Naive thymus-derived CD4-positive, alpha-beta T cell (primary cell): ENCODE measurements at regions of chr15 and their contacts with region 1.

Region 1: DNA sequence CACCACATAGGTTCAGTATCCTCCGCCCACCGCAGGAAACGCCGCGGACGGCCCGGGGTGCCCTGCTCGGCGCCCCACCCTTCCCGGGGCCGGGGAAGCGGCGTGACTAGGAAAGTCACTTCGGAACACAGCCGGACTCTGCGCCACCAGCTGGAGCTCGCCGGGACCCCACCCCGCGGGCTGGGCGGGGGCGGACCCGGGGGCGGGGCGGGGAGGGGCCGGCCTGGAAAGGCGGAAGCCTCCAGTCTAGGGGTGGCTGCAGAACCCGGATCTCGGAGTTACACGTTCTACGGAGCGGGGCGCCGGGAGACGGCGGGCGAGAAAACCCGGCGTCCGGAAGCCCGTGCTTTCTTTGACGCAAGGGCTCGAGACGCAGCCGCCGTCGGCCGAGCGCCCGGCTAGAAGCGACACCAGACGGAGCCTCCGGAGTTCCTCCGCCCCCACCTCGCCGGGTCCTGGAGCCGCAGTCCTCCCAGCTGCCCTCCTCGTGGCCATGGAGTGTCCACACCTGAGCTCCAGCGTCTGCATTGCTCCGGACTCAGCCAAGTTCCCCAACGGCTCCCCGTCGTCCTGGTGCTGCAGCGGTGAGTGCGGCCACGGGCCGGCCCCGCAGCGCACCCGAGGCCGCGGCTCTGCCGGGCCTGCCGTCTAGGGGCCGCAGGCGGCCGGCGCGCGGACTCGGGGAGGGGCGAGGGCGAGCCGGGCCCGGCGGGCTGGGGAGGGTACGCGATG is at the start of gene USP3:
- DNase-seq: peak; percentile 88 to 95 (median 94)
- ATAC-seq: peak; percentile 86
- H3K4me3 ChIP-seq: peak within 1 kb of the TSS; percentile 95
- H3K4me3 Mint-ChIP-seq: peak within 1 kb of the TSS; percentile 93 to 99 (median 98)
- H3K27ac ChIP-seq: peak within 1 kb of the TSS; percentile 97
- H3K27ac Mint-ChIP-seq: peak within 1 kb of the TSS; percentile 94 to 99 (median 97)
- H3K4me1 ChIP-seq: peaks cover 65 to 70% of the 10 kb centered on the region in 2 donors
- H3K4me1 Mint-ChIP-seq: peaks cover 30 to 75% (median 72%) of the 10 kb centered on the region in 7 donors
- H3K27me3 ChIP-seq: no peaks in the 10 kb centered on the region
- H3K27me3 Mint-ChIP-seq: no peaks in the 10 kb centered on the region
- total RNA-seq, gene USP3: 64.2 to 288 (median 155) TPM

Region 2: GRCh38 chr15:63188926-63189871 is 315.2 kb before region 1 on chr15 and contains the start of gene RAB8B:
- CTCF ChIA-PET with region 1: interaction called, 3 read pairs
- POLR2A ChIA-PET with region 1: interaction called, 4 read pairs
- intact Hi-C with region 1: loop called (anchors 1 to 2 kb)
- DNase-seq: peak; percentile 85 to 98 (median 93)
- ATAC-seq: peak; percentile 88
- H3K4me3 ChIP-seq: peak within 1 kb of the TSS; percentile 86
- H3K4me3 Mint-ChIP-seq: peak within 1 kb of the TSS; percentile 92 to 99 (median 97)
- H3K27ac ChIP-seq: peak within 1 kb of the TSS; percentile 99
- H3K27ac Mint-ChIP-seq: peak within 1 kb of the TSS; percentile 84 to 98 (median 95)
- H3K4me1 ChIP-seq: peaks cover 22 to 40% of the 10 kb centered on the region in 2 donors
- H3K4me1 Mint-ChIP-seq: peaks cover 41 to 54% (median 50%) of the 10 kb centered on the region in 7 donors
- H3K27me3 ChIP-seq: no peaks in the 10 kb centered on the region
- H3K27me3 Mint-ChIP-seq: peaks cover 0 to 3% (median 0%) of the 10 kb centered on the region in 5 donors
- total RNA-seq, gene RAB8B: 37.2 to 100 (median 71.3) TPM

Region 3: DNA sequence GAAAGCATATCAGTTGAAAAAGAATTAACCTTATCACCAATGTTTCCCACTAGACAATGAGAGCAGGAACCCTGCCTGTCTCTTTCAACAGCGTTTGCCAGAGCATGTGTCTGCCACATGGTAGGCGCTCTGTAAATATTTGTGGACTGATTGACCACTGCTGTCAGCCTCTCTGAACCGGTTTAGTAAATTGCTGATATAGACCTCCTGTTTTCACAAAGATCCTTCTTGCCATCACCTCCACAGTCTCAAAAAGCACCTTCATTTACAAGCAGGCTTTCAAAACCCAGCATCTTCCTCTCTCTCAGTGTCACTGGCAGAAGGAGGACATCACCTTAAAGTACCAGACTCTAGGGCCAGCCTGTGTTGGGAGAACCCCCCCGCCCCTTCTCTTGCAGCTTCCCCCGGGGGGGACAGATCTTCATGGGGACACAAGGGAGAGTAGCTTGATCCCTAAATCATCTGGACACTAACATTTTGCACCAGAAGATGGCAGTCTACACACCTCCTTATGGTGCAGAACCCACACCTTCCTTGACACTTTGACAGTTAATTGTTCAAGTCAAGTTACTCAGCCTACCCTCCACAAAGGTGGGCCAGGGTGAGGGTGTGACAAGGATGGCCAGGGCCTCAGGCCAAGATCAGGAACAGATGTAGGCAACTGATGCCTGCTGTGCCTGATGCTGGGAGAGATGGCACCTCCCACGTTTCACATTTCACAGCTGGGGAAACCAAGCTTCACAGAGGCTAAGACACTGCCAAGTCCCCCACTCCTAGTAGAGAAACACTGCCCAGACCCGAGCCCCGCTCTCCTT is 37.8 kb before region 1 on chr15:
- CTCF ChIA-PET with region 1: interaction called, 46 read pairs
- POLR2A ChIA-PET with region 1: interaction called, 392 read pairs
- intact Hi-C with region 1: loop called (anchors 1 kb)
- DNase-seq: peak in 8 of 9 donors; percentile 46 to 80 (median 74)
- ATAC-seq: peak; percentile 95
- H3K4me3 ChIP-seq: no peak overlapping the region
- H3K4me3 Mint-ChIP-seq: peak overlapping the region in 2 of 10 donors; percentile 5 to 6
- H3K27ac ChIP-seq: no peak overlapping the region
- H3K27ac Mint-ChIP-seq: peak overlapping the region; percentile 37 to 96 (median 82)
- H3K4me1 ChIP-seq: peaks cover 0 to 4% of the 10 kb centered on the region in 2 donors
- H3K4me1 Mint-ChIP-seq: peaks cover 12 to 43% (median 33%) of the 10 kb centered on the region in 7 donors
- H3K27me3 ChIP-seq: no peaks in the 10 kb centered on the region
- H3K27me3 Mint-ChIP-seq: peaks cover 0 to 18% (median 0%) of the 10 kb centered on the region in 5 donors

Region 4: DNA sequence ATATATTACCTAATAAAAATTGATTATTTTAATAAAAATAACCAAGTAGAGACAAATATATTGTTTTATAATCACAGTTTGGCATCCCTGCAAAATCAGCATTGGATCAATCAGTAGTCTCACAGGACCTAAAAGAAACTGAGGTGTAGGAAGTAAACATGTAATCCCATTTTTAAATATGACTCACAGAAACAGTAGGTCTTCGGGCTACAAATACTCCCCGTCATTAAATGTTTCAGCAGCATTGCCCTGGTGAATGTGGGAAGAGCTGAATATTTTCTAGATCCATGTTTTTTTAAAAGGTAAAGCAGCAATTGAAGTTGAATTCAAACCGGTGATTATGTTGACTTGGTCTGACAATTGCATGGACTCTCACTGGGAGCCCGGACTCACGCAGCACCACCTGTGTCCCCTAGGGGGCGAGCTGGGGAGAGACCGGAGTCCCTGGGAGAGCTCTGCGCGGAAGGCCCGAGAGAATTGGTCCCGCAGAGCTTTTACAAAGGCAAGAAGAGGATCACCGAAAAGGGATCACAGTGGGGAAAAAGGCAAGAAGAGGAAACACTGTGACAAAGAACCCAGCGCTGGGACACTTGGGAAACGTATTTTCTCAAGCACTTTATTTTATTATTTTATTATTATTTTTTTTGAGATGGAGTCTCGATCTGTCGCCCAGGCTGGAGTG is 17.2 kb before region 1 on chr15:
- CTCF ChIA-PET with region 1: interaction called, 70 read pairs
- POLR2A ChIA-PET with region 1: interaction called, 392 read pairs
- intact Hi-C with region 1: loop called (anchors 1 kb)
- DNase-seq: peak; percentile 68 to 89 (median 83)
- ATAC-seq: peak; percentile 86
- H3K4me3 ChIP-seq: no peak overlapping the region
- H3K4me3 Mint-ChIP-seq: peak overlapping the region; percentile 50 to 84 (median 59)
- H3K27ac ChIP-seq: peak overlapping the region; percentile 10
- H3K27ac Mint-ChIP-seq: peak overlapping the region; percentile 47 to 99 (median 82)
- H3K4me1 ChIP-seq: peaks cover 30 to 55% of the 10 kb centered on the region in 2 donors
- H3K4me1 Mint-ChIP-seq: peaks cover 40 to 88% (median 71%) of the 10 kb centered on the region in 7 donors
- H3K27me3 ChIP-seq: no peaks in the 10 kb centered on the region
- H3K27me3 Mint-ChIP-seq: no peaks in the 10 kb centered on the region

Region 5: DNA sequence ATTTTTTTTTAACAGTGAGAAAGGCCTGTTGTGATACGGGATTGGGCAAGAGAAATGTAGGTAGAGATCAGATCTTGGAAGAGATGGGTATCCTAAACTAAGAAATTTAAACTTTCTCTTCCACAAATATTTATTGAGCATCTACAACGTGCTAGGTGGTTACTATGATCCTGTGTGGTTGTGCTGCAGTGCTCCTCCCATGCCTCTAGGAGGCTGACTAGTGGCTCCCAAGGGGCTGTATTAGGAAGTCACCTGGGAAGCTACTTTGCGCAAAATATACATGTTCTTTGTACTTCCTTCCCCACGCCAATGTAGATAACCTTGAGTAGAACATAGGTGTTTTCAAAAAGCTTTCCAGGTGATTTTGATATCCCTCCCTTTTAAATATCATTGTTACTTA is 27.2 kb after region 1 on chr15:
- CTCF ChIA-PET with region 1: no interaction called
- POLR2A ChIA-PET with region 1: interaction called, 6 read pairs
- intact Hi-C with region 1: loop called in 1 of 2 experiments (anchors 1 kb)
- DNase-seq: no peak
- ATAC-seq: peak; percentile 61
- H3K4me3 ChIP-seq: no peak overlapping the region
- H3K4me3 Mint-ChIP-seq: peak overlapping the region in 6 of 10 donors; percentile 5 to 49 (median 16)
- H3K27ac ChIP-seq: no peak overlapping the region
- H3K27ac Mint-ChIP-seq: peak overlapping the region in 6 of 9 donors; percentile 21 to 71 (median 36)
- H3K4me1 ChIP-seq: peaks cover 12 to 48% of the 10 kb centered on the region in 2 donors
- H3K4me1 Mint-ChIP-seq: peaks cover 53 to 95% (median 93%) of the 10 kb centered on the region in 7 donors
- H3K27me3 ChIP-seq: no peaks in the 10 kb centered on the region
- H3K27me3 Mint-ChIP-seq: no peaks in the 10 kb centered on the region

Region 6: GRCh38 chr15:63833021-63833696 is 328.7 kb after region 1 on chr15:
- CTCF ChIA-PET with region 1: no interaction called
- POLR2A ChIA-PET with region 1: no interaction called
- intact Hi-C with region 1: loop called in 1 of 2 experiments (anchors 10 kb)
- DNase-seq: peak; percentile 11 to 55 (median 38)
- ATAC-seq: peak; percentile 48
- H3K4me3 ChIP-seq: peak overlapping the region; percentile 68
- H3K4me3 Mint-ChIP-seq: peak overlapping the region; percentile 86 to 98 (median 94)
- H3K27ac ChIP-seq: peak overlapping the region; percentile 99
- H3K27ac Mint-ChIP-seq: peak overlapping the region; percentile 94 to 99 (median 97)
- H3K4me1 ChIP-seq: peaks cover 30 to 31% of the 10 kb centered on the region in 2 donors
- H3K4me1 Mint-ChIP-seq: peaks cover 46 to 66% (median 56%) of the 10 kb centered on the region in 7 donors
- H3K27me3 ChIP-seq: no peaks in the 10 kb centered on the region
- H3K27me3 Mint-ChIP-seq: peaks cover 0 to 9% (median 0%) of the 10 kb centered on the region in 5 donors